Panc1 (cell line): ENCODE measurements at regions of chr10 and their contacts with region 1.

Region 1: DNA sequence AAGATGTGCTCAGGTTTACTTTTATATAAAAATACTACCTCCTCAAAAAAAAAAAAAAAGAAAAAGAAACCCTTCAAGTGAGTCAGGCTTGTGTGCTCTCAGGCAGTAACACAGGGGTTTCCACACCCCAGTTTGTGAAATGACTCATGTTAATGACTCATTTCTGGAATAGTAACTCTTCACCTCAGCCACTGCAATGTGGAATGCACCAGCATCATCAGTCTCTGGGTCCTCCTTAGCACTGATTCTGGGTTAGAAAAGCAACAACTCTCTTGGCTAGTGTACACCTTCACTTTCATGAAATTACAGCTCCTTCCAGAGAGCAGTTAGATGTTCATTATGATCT is 110.6 kb downstream of the EMX2 start:
- DNase-seq: peak; percentile 15
- ATAC-seq: peak; percentile 80; the same call in 1 of the 2 replicates
- H3K4me3 ChIP-seq: no peak overlapping the region
- H3K27ac ChIP-seq: no peak overlapping the region
- H3K4me1 ChIP-seq: no peaks in the 10 kb centered on the region
- H3K27me3 ChIP-seq: no peaks in the 10 kb centered on the region
- CTCF ChIP-seq: no peak

Region 2: DNA sequence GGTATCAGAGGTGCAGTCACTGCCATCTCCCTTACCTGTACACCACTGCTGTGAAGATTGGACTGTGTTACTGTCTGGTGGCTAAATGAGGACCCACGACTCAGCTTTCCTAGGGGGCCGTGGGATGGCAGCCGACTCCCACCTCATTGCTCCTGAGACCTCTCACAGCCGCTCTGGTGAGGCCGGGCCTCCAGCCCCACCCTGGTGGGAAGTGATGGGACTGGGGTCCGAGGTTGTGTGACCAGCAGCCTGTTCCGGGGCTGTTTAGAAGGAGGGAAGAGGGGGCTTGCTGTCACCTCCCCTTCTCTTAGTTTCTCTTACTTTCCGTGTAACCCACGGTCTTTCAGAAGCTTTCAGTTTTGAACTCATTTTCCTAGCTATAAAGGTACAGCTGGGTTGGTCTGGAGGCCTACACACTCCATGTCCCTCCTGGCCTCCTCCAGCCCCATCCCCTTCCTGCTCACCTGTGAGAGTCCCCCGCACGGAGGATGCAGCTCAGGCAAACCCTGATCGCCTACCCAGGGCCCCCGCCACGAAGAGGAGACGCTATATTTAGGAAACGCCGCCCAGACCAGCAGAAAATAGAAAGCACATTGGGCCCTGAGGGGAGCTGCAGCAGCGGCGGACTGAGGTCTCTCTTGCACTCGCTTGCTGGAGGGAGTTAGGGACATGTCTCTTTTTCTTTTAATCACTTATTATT is 106.0 kb before region 1 on chr10:
- CTCF ChIA-PET with region 1: interaction called, 11 read pairs
- POLR2A ChIA-PET with region 1: no interaction called
- in situ Hi-C with region 1: no loop called
- intact Hi-C with region 1: no loop called
- DNase-seq: no peak
- ATAC-seq: no peak
- H3K4me3 ChIP-seq: no peak overlapping the region
- H3K27ac ChIP-seq: no peak overlapping the region
- H3K4me1 ChIP-seq: peaks cover 8% of the 10 kb centered on the region; the same call in 1 of the 2 replicates
- H3K27me3 ChIP-seq: peaks cover 57% of the 10 kb centered on the region
- CTCF ChIP-seq: no peak